A673 (cell line): ENCODE measurements at regions of chrX and their contacts with region 1.

Region 1: DNA sequence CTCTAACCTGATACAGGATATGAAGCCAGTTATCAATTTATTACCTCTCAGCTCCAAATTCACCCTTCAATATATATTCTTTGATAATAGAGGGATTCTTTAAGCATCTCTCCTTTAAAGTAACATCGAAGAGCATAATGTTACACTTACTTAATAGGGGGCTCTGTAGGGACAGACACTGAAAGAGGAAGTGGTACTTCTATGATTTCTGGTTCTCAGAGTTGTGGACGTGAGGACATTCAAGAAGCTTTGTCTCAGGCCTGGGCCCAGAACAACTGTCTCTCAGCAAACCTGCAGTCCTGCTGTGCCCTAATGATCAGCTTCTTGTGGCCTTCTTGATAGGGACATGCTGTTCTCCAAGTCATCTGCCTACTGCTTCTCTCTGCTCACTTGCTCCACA is 4.2 kb upstream of the ZXDB start:
- DNase-seq: no peak
- H3K4me3 ChIP-seq: no peak overlapping the region
- H3K27ac ChIP-seq: no peak overlapping the region
- H3K4me1 ChIP-seq: no peaks in the 10 kb centered on the region
- H3K27me3 ChIP-seq: no peaks in the 10 kb centered on the region
- CTCF ChIP-seq: no peak

Region 2: DNA sequence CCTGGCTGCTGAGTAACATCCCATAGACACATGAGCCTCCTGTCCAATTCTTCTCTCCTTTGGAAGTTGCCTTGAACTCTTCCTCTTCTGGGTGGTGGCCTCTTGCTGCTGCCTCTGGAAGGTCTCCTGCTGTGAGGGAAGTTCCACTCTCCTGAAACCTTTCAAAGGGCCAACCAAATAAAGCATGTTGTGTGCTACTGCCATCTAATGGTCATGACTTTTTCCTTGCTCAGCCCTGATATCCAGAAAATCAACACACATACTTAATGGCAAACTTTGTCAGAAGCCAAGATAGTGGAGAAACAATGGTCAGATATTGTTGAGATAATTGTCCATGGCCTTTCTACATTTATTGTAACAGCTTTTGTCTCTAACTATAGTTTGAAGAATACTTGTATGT is 341.8 kb after region 1 on chrX:
- CTCF ChIA-PET with region 1: no interaction called
- POLR2A ChIA-PET with region 1: no interaction called
- intact Hi-C with region 1: loop called (anchors 5 kb)
- DNase-seq: peak; percentile 67
- H3K4me3 ChIP-seq: no peak overlapping the region
- H3K27ac ChIP-seq: no peak overlapping the region
- H3K4me1 ChIP-seq: no peaks in the 10 kb centered on the region
- H3K27me3 ChIP-seq: no peaks in the 10 kb centered on the region
- CTCF ChIP-seq: peak; percentile 66

Region 3: GRCh38 chrX:58025979-58026378 is 438.4 kb after region 1 on chrX:
- CTCF ChIA-PET with region 1: no interaction called
- POLR2A ChIA-PET with region 1: no interaction called
- intact Hi-C with region 1: loop called (anchors 10 kb)
- DNase-seq: peak; percentile 52
- H3K4me3 ChIP-seq: no peak overlapping the region
- H3K27ac ChIP-seq: no peak overlapping the region
- H3K4me1 ChIP-seq: no peaks in the 10 kb centered on the region
- H3K27me3 ChIP-seq: no peaks in the 10 kb centered on the region
- CTCF ChIP-seq: peak; percentile 73